ENCODE measurements at regions of chr1 and their contacts with region 1.

Region 1: DNA sequence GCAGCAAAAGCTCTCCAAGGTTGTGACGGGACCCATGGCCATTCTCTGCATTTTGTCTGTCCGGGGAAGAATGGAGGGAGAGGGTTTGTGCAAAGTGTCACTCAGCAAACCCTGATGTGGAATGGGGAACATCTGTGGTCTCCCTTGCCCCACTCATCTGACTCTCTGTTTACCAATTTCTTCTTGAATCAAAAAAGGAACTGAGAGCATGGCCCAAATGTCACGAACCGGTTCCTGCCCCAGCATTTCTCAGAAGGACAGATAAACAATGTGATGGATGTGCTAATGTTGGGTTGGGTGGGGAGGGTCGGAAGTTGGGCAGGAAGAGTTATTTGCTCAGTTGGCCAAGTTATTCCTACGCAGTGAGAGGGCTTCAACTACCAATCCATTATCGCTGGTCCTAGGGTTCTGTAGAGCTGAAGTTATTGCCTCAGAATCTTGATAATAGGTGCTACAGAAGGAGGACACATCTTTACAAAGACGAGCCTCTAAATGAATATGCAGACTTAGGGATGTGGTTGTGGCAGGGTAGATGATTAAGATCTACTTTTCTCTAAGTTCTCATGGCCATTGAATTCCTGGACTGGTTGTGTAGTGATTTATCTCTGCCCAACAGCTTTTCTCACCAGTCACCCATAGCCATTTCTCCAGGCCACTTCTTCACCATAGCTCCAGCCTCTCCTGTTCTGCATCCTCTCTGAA is 9.6 kb upstream of the DUSP12 start:
- DNase-seq: no peak

Region 2: GRCh38 chr1:161486806-161487741 is 252.9 kb before region 1 on chr1:
- intact Hi-C with region 1: loop called (anchors 1 kb)
- DNase-seq: peak in 2 of 10 donors; percentile 11 to 45

Region 3: GRCh38 chr1:161781995-161782394 is 42.0 kb after region 1 on chr1:
- intact Hi-C with region 1: no loop called
- DNase-seq: no peak

Region 4: DNA sequence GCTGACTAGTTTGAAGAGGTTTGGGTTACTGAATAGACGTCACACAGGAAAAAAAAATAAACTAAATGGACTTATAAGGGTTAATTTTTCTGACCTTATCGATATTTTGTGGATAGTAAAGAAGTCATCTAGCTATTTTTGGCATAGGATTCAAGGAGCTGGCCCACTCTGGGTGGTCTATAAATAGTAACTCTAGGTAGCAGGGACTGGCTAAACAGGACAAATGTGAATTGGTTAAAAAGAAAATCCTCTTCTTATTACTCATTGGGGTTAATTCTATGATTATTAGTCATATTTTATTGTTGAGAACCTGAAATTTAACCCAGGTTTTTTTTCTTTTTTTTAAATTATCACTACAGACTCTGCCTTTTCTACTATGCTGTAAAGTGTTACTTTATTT is 87.8 kb after region 1 on chr1:
- intact Hi-C with region 1: no loop called
- DNase-seq: no peak

Region 5: DNA sequence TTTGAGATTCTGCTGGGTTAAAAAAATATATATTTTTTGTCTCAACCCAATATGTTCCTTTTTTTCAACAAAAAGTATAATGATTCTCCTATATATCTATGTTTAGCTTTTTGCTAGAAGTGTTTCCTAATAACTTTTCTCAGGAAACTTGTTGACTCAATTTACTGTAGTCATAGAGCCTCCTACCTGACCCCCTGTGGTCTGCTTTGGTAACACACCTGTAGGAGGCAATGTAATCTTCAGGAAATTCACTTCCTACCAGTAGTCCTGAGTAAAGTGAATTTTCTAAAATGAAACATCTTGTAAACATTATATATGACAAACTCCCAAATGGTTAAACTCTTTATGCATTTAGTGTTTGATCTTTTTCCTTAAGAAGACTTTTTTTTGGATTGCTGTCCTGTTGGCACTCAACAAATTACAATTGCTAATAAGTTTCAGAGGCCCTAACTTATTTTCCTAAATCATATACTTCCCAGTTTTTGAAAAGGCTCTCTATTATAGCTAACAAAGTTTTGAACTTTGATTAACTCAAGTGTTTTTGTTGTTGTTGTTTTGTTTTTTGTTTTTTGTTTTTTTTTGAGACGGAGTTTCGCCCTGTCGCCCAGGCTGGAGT is 165.4 kb after region 1 on chr1:
- intact Hi-C with region 1: no loop called
- DNase-seq: no peak